ENCODE measurements at regions of chr12 and their contacts with region 1.

Region 1: DNA sequence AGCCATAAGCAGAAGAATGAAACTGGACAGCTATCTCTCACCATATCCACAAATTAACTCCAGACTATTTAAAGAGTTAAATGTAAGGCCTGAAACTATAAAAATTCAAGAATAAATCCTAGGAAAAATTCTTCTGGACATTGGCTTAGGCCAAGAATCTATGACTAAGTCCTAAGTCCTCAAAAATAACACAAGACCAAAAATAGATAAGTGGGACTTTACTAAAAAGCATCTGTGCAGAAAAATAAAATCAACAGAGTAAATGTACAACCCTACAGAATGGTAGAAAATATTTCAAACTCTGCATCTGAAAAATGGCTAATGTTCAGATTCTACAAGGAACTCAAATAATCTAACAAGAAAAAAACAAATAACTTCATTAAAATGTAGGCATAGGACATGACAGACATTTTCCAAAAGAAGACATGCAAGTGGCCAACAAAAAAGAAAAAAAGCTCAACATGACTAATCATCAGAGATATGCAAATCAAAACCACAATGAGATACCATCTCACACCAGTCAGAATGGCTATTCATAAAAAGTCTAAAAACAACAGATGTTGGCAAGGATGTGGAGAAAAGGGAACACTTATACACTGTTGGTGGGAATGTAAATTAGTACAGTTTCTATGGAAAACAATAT is 61.0 kb upstream of the PPFIA2 start:
- DNase-seq: no peak
- H3K4me3 ChIP-seq: no peak overlapping the region
- H3K27ac ChIP-seq: no peak overlapping the region
- H3K4me1 ChIP-seq: no peaks in the 10 kb centered on the region
- H3K27me3 ChIP-seq: no peaks in the 10 kb centered on the region
- CTCF ChIP-seq: no peak

Region 2: GRCh38 chr12:81530352-81530751 is 289.8 kb before region 1 on chr12:
- CTCF ChIA-PET with region 1: no interaction called
- POLR2A ChIA-PET with region 1: no interaction called
- intact Hi-C with region 1: no loop called
- DNase-seq: no peak
- H3K4me3 ChIP-seq: no peak overlapping the region
- H3K27ac ChIP-seq: no peak overlapping the region
- H3K4me1 ChIP-seq: no peaks in the 10 kb centered on the region
- H3K27me3 ChIP-seq: no peaks in the 10 kb centered on the region
- CTCF ChIP-seq: no peak

Region 3: GRCh38 chr12:81942594-81942993 is 122.5 kb after region 1 on chr12:
- CTCF ChIA-PET with region 1: no interaction called
- POLR2A ChIA-PET with region 1: no interaction called
- intact Hi-C with region 1: no loop called
- DNase-seq: no peak
- H3K4me3 ChIP-seq: no peak overlapping the region
- H3K27ac ChIP-seq: no peak overlapping the region
- H3K4me1 ChIP-seq: no peaks in the 10 kb centered on the region
- H3K27me3 ChIP-seq: no peaks in the 10 kb centered on the region
- CTCF ChIP-seq: no peak

Region 4: DNA sequence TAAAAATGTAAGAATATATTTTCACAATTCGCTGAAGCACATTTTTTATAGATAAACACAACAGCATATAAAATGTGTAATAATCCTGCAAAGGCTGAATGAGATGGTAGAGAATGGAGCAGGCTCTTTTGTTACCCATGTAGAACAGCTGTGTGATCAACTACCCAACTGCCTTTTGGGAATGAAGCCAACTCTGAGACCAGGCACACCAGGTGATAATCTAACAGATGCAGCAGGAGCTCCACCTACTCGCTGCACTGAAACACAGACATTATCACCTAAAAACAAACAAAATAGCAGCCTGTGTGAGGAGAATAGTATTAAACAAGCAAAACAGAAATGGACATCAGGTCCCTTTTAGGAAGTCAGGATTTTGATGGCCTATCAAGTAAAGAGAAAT is 354.8 kb after region 1 on chr12:
- CTCF ChIA-PET with region 1: no interaction called
- POLR2A ChIA-PET with region 1: interaction called, 11 read pairs
- intact Hi-C with region 1: no loop called
- DNase-seq: no peak
- H3K4me3 ChIP-seq: no peak overlapping the region
- H3K27ac ChIP-seq: no peak overlapping the region
- H3K4me1 ChIP-seq: no peaks in the 10 kb centered on the region
- H3K27me3 ChIP-seq: no peaks in the 10 kb centered on the region
- CTCF ChIP-seq: no peak

Measured in A673 (cell line).